ENCODE measurements at regions of chrX and their contacts with region 1.

Region 1: DNA sequence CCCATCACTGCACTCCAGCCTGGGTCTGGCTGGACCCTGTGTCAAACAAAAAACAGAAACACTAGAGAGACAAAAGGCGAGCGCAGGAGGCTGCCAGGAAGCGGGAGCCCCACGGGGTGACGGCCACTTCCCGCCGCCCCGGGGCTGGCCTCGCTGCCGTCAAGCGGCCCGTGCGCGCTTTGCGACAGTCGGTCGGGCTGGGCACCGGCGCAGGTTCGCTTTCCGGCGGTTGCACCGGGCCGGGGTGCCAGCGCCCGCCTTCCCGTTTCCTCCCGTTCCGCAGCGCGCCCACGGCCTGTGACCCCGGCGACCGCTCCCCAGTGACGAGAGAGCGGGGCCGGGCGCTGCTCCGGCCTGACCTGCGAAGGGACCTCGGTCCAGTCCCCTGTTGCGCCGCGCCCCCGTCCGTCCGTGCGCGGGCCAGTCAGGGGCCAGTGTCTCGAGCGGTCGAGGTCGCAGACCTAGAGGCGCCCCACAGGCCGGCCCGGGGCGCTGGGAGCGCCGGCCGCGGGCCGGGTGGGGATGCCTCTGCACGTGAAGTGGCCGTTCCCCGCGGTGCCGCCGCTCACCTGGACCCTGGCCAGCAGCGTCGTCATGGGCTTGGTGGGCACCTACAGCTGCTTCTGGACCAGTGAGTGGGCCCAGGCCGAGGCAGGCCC is at the start of gene TAFAZZIN:
- DNase-seq: peak; percentile 78 to 80
- ATAC-seq: peak; percentile 55 to 56
- H3K4me3 ChIP-seq: peak within 1 kb of the TSS; percentile 89
- H3K27ac ChIP-seq: peak within 1 kb of the TSS; percentile 96 to 100
- H3K4me1 ChIP-seq: peaks cover 28% of the 10 kb centered on the region
- CTCF ChIP-seq: no peak
- EP300 ChIP-seq: no peak
- POLR2A ChIP-seq: peak; percentile 75
- RAD21 ChIP-seq: no peak
- polyA plus RNA-seq, gene TAFAZZIN: 32.6 and 36.9 TPM in 2 replicates

Region 2: DNA sequence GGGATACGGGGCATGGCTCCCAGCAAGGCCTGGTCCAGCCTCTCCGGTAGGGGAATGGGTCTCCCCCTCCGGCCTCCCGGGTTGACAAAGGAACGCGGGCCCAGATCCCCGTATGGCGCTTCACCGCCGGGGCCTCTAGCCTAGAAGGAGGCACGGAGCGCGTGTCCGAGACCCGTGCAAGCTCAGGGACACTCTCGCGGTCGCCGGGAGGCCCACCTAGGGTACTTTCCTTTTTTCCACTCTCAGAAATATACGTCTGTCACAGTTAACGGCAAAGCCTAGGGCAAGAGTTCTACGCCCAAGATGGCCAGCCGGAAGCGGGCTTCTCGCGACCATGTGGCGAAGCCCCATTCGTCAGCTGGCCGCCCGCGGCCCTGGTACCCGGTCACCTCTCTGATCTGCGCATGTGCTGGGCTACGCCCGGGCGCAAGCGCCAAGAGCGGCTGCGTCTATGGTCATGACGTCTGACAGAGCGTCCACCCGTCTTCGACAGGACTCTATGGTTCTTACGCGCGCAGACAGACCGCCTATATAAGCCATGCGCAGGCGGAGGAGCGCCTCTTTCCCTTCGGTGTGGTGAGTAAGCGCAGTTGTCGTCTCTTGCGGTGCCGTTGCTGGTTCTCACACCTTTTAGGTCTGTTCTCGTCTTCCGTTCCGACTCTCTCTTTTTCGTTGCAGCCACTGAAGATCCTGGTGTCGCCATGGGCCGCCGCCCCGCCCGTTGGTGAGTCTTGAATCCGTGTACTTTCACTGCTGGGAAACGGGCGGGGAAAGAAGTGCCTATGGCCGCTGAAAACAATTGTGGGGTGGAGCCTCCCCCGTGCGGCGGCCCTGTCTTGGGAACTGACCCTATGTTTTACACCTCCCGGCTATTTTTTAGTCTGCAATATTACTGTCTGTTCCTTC is 13.4 kb before region 1 on chrX and contains the start of gene RPL10:
- CTCF ChIA-PET with region 1: interaction called, 21 read pairs
- POLR2A ChIA-PET with region 1: interaction called, 19 read pairs
- DNase-seq: peak; percentile 96 to 99
- ATAC-seq: peak; percentile 60 to 63
- H3K4me3 ChIP-seq: peak within 1 kb of the TSS; percentile 88
- H3K27ac ChIP-seq: peak within 1 kb of the TSS; percentile 96 to 100
- H3K4me1 ChIP-seq: peaks cover 18% of the 10 kb centered on the region; the same call in 2 of the 3 replicates
- CTCF ChIP-seq: no peak
- EP300 ChIP-seq: no peak
- POLR2A ChIP-seq: peak; percentile 99
- RAD21 ChIP-seq: no peak
- polyA plus RNA-seq, gene RPL10: 3,216 and 3,468 TPM in 2 replicates

Region 3: GRCh38 chrX:155028877-155029291 is 617.4 kb after region 1 on chrX:
- CTCF ChIA-PET with region 1: no interaction called
- POLR2A ChIA-PET with region 1: no interaction called
- DNase-seq: peak in 1 of 2 experiments; percentile 17
- ATAC-seq: no peak
- H3K4me3 ChIP-seq: no peak overlapping the region
- H3K27ac ChIP-seq: peak overlapping the region; percentile 70 to 89; a peak in 5 of 6 replicates
- H3K4me1 ChIP-seq: peaks cover 27% of the 10 kb centered on the region
- CTCF ChIP-seq: no peak
- EP300 ChIP-seq: no peak
- POLR2A ChIP-seq: no peak
- RAD21 ChIP-seq: no peak